ENCODE measurements at regions of chr20 and their contacts with region 1.

Region 1: DNA sequence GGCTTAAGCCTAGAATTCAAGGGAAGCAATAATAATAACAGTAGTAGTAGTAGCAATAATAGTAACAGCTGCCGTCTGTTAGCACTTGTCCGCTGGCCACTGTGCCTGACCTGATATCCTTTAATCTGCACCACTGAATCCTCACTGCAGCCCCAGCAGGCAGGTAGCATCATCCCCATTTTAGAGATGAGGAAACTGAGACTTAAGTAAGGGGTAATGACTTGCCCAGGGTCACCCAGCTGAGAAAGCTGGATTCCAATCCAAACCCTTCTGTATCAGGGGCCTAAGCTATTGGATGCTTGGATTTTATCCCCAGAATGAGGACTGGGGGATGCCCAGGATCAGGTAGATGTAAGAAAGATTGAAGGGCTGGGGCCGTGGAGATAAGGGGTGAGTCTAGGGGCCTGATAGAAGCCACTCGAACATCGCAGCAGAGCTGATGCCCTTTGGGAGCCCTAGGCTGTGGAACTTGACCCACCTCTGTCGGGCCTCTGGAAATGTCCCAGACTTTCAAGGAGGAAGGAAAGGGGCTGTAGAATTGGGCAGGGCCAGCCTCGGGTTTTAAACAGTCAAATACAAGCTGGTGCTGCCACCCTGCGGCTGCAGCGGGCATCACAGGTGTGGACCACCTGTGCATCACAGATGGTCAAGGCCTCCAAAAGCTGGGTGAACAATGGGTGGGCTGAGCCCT is 102.1 kb upstream of the MYL9 start:
- DNase-seq: peak; percentile 69
- H3K4me3 ChIP-seq: no peak overlapping the region
- H3K27ac ChIP-seq: no peak overlapping the region
- H3K4me1 ChIP-seq: peaks cover 3% of the 10 kb centered on the region
- CTCF ChIP-seq: peak; percentile 93

Region 2: GRCh38 chr20:36214684-36215256 is 224.4 kb before region 1 on chr20:
- CTCF ChIA-PET with region 1: interaction called, 3 read pairs
- POLR2A ChIA-PET with region 1: no interaction called
- intact Hi-C with region 1: loop called (anchors 1 kb)
- DNase-seq: peak; percentile 57
- H3K4me3 ChIP-seq: no peak overlapping the region
- H3K27ac ChIP-seq: no peak overlapping the region
- H3K4me1 ChIP-seq: no peaks in the 10 kb centered on the region
- CTCF ChIP-seq: peak; percentile 83

Region 3: DNA sequence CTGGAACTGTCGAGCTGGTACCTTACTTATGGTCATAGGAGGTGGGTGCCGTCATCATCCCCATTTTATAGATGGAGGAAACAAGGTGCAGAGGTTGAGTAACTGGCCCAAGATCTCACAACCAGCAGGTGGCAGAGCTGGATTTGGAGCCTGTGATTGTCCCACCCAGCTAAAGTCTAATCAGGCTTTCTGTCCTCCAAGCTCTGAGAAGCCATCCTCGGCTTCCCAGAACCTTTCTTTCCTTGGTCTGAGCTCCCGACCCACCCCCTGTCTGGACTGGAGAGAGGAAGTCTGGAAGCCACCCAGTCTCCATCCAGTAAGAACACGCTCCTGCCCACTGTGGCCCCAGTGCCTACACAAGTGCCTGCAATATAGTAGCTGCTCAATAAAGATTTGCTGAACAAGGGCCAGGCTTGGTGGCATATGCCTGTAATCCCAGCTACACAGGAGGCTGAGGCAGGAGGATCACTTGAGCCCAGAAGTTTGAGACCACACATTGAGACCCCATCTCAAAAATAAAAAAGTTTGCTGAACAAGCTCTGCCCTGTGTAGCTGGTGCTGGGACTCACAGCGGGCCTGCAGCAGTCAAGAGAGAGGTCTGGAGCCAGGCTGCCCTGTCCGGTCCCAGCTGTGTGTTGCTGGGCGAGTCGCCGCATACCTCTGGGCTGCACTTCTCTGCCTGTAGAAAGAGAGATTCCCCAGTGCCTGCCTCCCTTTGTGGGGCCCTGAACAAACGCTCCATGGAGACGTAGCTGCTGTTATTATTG is 165.6 kb before region 1 on chr20:
- CTCF ChIA-PET with region 1: interaction called, 3 read pairs
- POLR2A ChIA-PET with region 1: no interaction called
- intact Hi-C with region 1: loop called (anchors 1 kb)
- DNase-seq: peak; percentile 49
- H3K4me3 ChIP-seq: no peak overlapping the region
- H3K27ac ChIP-seq: no peak overlapping the region
- H3K4me1 ChIP-seq: no peaks in the 10 kb centered on the region
- CTCF ChIP-seq: peak; percentile 76

Region 4: GRCh38 chr20:36355469-36356171 is 83.6 kb before region 1 on chr20:
- CTCF ChIA-PET with region 1: no interaction called
- POLR2A ChIA-PET with region 1: no interaction called
- intact Hi-C with region 1: no loop called
- DNase-seq: no peak
- H3K4me3 ChIP-seq: no peak overlapping the region
- H3K27ac ChIP-seq: no peak overlapping the region
- H3K4me1 ChIP-seq: no peaks in the 10 kb centered on the region
- CTCF ChIP-seq: no peak